ENCODE measurements at regions of chr1 and their contacts with region 1.

Region 1: DNA sequence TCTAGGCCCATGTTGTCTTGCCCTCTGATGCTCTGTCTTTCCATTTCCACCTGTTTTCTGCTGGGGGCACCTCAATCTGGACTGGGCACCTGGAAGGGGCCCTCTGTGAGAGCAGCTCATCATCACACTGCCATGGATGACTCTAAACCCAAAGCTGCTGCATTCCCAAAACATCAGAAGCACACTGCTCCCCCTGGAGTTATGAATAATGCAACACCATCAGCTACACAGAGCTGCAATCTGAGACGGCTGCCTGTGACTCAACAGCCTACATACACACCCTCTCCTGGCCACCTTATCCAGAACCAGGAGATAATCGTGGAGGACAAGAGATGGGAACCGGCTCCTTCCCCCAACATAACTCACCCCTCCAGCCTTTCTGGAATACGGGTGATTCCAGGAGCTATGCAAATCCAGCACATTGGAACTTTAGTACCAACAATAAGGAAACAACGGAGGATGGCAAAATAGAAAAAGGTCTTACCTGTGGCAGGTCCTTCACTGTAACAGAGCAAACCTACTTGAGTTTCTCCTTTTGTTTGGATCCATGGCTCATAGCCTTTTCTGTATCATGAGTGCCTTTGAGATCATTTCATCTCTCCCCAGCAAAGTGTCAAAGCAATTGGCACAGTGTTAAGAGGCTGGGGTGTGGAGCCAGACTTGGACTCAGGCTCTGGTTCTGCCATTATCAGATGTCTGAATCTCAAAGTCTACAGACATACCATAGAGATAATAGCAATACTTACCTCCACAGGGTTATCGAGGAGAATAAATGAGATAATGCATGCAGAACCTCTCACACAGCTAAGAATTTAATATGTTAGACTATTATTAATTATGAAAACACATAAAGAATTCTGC is 29.3 kb downstream of the AK2 start:
- DNase-seq: peak; percentile 89
- H3K4me3 ChIP-seq: no peak overlapping the region
- H3K27ac ChIP-seq: no peak overlapping the region
- H3K4me1 ChIP-seq: peaks cover 41% of the 10 kb centered on the region
- H3K27me3 ChIP-seq: no peaks in the 10 kb centered on the region
- CTCF ChIP-seq: peak; percentile 60 to 62
- POLR2A ChIP-seq: peak; percentile 28

Region 2: GRCh38 chr1:32919811-32920733 is 87.3 kb before region 1 on chr1:
- CTCF ChIA-PET with region 1: interaction called, 13 read pairs
- POLR2A ChIA-PET with region 1: no interaction called
- dilution Hi-C with region 1: no loop called
- intact Hi-C with region 1: no loop called
- DNase-seq: no peak
- H3K4me3 ChIP-seq: no peak overlapping the region
- H3K27ac ChIP-seq: no peak overlapping the region
- H3K4me1 ChIP-seq: no peaks in the 10 kb centered on the region
- H3K27me3 ChIP-seq: peaks cover 4% of the 10 kb centered on the region in 2 experiments
- CTCF ChIP-seq: no peak
- POLR2A ChIP-seq: no peak

Region 3: DNA sequence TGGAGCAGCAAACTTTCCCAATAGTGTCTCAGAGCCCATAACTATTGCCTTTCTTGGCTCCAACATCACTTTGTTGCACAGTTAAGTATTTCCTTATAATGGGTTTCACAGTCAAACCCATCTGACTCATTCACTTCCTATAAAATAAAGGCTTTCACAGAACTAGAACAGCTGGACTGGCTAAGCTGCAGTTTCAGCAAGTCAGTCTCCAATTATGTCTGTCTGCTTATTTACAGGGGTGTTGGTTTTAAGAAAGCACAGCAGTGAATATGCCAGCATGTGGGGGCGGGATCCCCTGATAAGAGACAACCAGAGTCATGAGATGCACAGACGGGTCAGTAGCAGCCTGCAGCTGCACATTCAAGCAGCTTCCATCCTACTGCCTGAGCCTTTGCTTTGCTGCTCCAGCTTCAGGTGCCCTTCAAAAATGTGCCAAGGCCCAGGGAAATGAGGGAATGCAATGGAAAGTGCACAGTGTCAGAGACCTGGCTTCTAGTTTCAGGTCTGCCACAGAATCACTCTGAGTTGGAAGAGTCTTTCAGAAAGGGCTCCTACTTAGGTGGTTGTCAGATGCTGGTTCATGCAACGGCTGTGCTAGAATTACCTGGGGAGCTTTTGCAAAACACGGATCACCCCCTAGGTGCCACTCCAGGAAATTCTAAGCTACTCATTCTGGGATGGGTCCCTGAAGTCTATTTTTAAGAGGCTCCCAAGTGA is 67.6 kb before region 1 on chr1:
- CTCF ChIA-PET with region 1: interaction called, 340 read pairs
- POLR2A ChIA-PET with region 1: interaction called, 4 read pairs
- dilution Hi-C with region 1: loop called (anchors 10 kb)
- intact Hi-C with region 1: no loop called
- DNase-seq: peak; percentile 87
- H3K4me3 ChIP-seq: no peak overlapping the region
- H3K27ac ChIP-seq: peak overlapping the region; percentile 6
- H3K4me1 ChIP-seq: peaks cover 40% of the 10 kb centered on the region
- H3K27me3 ChIP-seq: no peaks in the 10 kb centered on the region
- CTCF ChIP-seq: no peak
- POLR2A ChIP-seq: no peak

Region 4: DNA sequence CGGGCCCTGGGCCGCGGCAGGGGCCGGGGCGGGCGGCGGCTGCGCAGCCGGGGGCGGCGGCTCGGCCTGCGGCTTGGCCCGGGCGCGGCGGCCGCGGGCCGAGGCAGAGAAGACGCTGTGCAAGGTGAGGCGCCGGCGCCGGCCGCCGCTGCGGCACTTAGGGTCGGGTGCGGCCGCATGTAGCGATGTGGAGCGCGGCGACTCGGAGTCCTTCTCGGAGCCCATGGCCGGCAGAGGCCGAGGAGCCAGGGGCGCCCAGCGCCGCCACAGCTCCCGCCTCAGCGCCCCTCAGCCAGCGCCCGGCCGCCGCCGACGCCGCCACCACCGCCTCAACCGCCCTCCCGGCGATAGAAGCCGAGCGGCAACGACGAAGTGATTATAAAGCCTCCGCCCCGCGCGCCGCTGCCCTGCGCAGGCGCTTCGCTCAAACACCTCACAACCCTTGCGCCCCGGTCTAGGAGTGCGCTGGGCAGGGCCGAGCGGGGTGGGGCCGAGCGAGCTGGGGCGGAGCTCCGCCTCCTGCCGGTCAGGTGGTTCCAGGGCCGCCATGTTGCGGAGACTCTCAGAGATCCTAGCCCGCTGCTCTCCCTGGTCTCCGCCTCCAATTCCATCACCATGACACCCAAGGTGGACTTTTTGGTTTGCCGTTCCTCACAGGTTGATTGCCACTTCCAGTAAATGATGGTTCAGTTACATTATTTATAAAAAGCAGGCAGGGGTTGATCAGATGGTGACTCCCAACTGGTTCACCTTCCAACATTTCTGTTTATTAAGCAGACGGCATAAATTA is 42.8 kb before region 1 on chr1 and contains the start of gene RNF19B:
- CTCF ChIA-PET with region 1: interaction called, 43 read pairs
- POLR2A ChIA-PET with region 1: interaction called, 10 read pairs
- dilution Hi-C with region 1: no loop called
- intact Hi-C with region 1: loop called (anchors 1 kb)
- DNase-seq: peak; percentile 95
- H3K4me3 ChIP-seq: peak within 1 kb of the TSS; percentile 76 to 98 (median 78)
- H3K27ac ChIP-seq: peak within 1 kb of the TSS; percentile 36
- H3K4me1 ChIP-seq: peaks cover 20% of the 10 kb centered on the region
- H3K27me3 ChIP-seq: no peaks in the 10 kb centered on the region
- CTCF ChIP-seq: no peak
- POLR2A ChIP-seq: peak; percentile 99
- total RNA-seq, gene RNF19B: 24.2 and 25.6 TPM in 2 replicates

Region 5: GRCh38 chr1:32981003-32981901 is 26.2 kb before region 1 on chr1:
- CTCF ChIA-PET with region 1: interaction called, 22 read pairs
- POLR2A ChIA-PET with region 1: interaction called, 4 read pairs
- dilution Hi-C with region 1: no loop called
- intact Hi-C with region 1: loop called (anchors 1 kb)
- DNase-seq: peak; percentile 96
- H3K4me3 ChIP-seq: no peak overlapping the region
- H3K27ac ChIP-seq: peak overlapping the region; percentile 88
- H3K4me1 ChIP-seq: peaks cover 27% of the 10 kb centered on the region
- H3K27me3 ChIP-seq: no peaks in the 10 kb centered on the region
- CTCF ChIP-seq: no peak
- POLR2A ChIP-seq: no peak

Region 6: DNA sequence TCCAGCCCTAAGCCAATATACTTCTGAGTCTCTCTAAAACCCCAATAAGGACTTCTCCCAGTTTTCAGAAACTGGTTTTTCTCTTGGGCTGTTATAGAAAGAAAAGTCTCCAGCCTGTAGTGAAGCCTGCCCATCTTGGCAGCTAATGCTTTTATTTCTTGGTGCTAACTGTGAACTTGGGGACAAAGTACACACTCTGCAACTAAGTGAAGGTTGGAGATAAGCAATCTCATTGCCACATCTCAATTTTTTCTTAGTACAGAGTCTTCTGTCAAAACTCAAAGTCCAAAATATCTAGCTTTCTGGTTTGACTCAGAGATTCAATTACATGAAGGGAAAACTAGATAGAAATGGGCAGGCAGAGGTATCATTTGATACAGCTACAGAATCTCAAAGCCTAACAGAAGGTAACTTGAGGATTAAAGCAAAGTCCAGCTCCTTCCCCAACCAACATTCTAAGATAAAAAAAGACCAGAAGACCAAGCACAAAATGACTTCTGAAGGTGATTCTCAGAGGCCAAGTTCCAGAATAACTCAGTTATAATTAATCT is 15.3 kb after region 1 on chr1:
- CTCF ChIA-PET with region 1: interaction called, 11 read pairs
- POLR2A ChIA-PET with region 1: no interaction called
- dilution Hi-C with region 1: no loop called
- intact Hi-C with region 1: no loop called
- DNase-seq: no peak
- H3K4me3 ChIP-seq: no peak overlapping the region
- H3K27ac ChIP-seq: no peak overlapping the region
- H3K4me1 ChIP-seq: no peaks in the 10 kb centered on the region
- H3K27me3 ChIP-seq: no peaks in the 10 kb centered on the region
- CTCF ChIP-seq: no peak
- POLR2A ChIP-seq: no peak

Region 7: GRCh38 chr1:33086384-33086850 is 79.0 kb after region 1 on chr1:
- CTCF ChIA-PET with region 1: interaction called, 20 read pairs
- POLR2A ChIA-PET with region 1: no interaction called
- dilution Hi-C with region 1: no loop called
- intact Hi-C with region 1: no loop called
- DNase-seq: peak; percentile 77
- H3K4me3 ChIP-seq: no peak overlapping the region
- H3K27ac ChIP-seq: no peak overlapping the region
- H3K4me1 ChIP-seq: peaks cover 3% of the 10 kb centered on the region
- H3K27me3 ChIP-seq: peaks cover 11 to 22% of the 10 kb centered on the region in 2 experiments
- CTCF ChIP-seq: peak; percentile 71 to 91
- POLR2A ChIP-seq: no peak

Region 8: DNA sequence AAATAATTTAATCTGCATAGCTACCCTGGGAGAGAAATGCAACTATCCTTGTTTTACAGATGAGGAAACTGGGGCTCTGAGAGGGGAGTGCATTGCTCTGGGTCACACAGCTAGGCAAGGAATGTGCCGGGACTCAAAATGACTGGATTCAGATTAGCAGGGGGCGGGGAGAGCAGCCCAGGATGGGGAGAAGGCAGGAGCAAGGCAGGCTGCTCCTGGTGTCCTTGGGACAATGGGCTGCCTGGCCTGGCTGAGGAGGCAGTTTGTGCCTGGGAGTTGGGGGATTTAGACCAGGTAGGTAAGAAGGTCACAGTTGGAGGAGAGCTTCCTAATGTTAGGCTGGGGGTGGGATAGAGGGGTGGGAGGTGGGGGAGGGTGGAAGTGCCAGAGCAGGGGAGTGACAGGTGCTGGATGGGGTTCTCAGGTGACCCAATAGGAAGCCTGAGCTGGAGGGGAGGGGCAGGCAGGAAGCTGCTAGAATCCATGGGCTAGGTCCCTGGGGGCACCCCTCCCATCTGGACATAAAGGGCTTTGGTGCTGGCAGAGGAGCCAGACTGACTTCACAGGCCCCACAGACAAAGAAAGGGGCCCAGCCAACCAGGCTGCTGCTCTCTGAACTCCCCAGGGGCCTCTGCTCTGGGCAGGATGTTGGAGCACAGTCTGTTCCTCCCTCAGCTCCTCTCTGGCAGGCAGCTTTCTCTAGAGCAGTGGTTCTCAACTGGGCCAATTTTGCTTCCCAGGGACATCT is 145.4 kb after region 1 on chr1:
- CTCF ChIA-PET with region 1: no interaction called
- POLR2A ChIA-PET with region 1: no interaction called
- dilution Hi-C with region 1: no loop called
- intact Hi-C with region 1: no loop called
- DNase-seq: no peak
- H3K4me3 ChIP-seq: no peak overlapping the region
- H3K27ac ChIP-seq: no peak overlapping the region
- H3K4me1 ChIP-seq: no peaks in the 10 kb centered on the region
- H3K27me3 ChIP-seq: no peaks in the 10 kb centered on the region
- CTCF ChIP-seq: no peak
- POLR2A ChIP-seq: no peak